ENCODE measurements at regions of chr11 and their contacts with region 1.

Region 1: GRCh38 chr11:5291207-5291838 is 10.4 kb downstream of the OR51B4 start:
- DNase-seq: no peak
- H3K4me3 ChIP-seq: no peak overlapping the region
- H3K27me3 ChIP-seq: no peaks in the 10 kb centered on the region
- CTCF ChIP-seq: peak; percentile 66

Region 2: DNA sequence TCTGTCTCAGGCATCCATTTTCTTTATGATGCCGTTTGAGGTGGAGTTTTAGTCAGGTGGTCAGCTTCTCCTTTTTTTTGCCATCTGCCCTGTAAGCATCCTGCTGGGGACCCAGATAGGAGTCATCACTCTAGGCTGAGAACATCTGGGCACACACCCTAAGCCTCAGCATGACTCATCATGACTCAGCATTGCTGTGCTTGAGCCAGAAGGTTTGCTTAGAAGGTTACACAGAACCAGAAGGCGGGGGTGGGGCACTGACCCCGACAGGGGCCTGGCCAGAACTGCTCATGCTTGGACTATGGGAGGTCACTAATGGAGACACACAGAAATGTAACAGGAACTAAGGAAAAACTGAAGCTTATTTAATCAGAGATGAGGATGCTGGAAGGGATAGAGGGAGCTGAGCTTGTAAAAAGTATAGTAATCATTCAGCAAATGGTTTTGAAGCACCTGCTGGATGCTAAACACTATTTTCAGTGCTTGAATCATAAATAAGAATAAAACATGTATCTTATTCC is 10.7 kb before region 1 on chr11:
- CTCF ChIA-PET with region 1: interaction called, 11 read pairs
- POLR2A ChIA-PET with region 1: interaction called, 3 read pairs
- DNase-seq: peak; percentile 97
- H3K4me3 ChIP-seq: no peak overlapping the region
- H3K27me3 ChIP-seq: no peaks in the 10 kb centered on the region
- CTCF ChIP-seq: no peak

Region 3: GRCh38 chr11:5364214-5364613 is 72.9 kb after region 1 on chr11:
- CTCF ChIA-PET with region 1: interaction called, 10 read pairs
- POLR2A ChIA-PET with region 1: no interaction called
- DNase-seq: peak; percentile 53
- H3K4me3 ChIP-seq: no peak overlapping the region
- H3K27me3 ChIP-seq: no peaks in the 10 kb centered on the region
- CTCF ChIP-seq: no peak

Measured in BJ (cell line).